ENCODE measurements at regions of chr10 and their contacts with region 1.

Region 1: DNA sequence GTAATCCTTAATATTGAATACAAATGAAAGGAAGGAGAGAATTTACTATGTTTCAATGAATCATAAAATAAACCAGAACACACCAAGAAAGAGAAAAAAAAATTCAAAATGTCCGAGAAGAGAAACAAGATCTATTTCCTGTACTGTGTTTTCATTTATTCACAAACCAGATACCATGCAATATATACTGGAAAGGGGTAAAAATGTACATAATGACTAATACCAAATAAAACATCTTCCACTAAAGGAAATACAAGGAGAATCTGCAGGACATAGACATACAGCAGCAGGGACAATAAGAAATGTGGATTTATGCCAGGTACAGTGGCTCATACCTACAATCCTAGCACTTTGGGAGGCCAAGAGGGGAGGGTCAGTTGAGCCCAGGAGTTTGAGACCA is 24.3 kb upstream of the TMEM26 start:
- DNase-seq: no peak
- H3K4me3 ChIP-seq: no peak overlapping the region
- H3K27ac ChIP-seq: no peak overlapping the region
- H3K4me1 ChIP-seq: no peaks in the 10 kb centered on the region
- H3K27me3 ChIP-seq: no peaks in the 10 kb centered on the region
- CTCF ChIP-seq: no peak

Region 2: GRCh38 chr10:61319386-61320256 is 157.8 kb before region 1 on chr10:
- CTCF ChIA-PET with region 1: no interaction called
- POLR2A ChIA-PET with region 1: no interaction called
- intact Hi-C with region 1: no loop called
- DNase-seq: peak in 1 of 2 experiments; percentile 35
- H3K4me3 ChIP-seq: no peak overlapping the region
- H3K27ac ChIP-seq: no peak overlapping the region
- H3K4me1 ChIP-seq: no peaks in the 10 kb centered on the region
- H3K27me3 ChIP-seq: no peaks in the 10 kb centered on the region
- CTCF ChIP-seq: no peak

Region 3: DNA sequence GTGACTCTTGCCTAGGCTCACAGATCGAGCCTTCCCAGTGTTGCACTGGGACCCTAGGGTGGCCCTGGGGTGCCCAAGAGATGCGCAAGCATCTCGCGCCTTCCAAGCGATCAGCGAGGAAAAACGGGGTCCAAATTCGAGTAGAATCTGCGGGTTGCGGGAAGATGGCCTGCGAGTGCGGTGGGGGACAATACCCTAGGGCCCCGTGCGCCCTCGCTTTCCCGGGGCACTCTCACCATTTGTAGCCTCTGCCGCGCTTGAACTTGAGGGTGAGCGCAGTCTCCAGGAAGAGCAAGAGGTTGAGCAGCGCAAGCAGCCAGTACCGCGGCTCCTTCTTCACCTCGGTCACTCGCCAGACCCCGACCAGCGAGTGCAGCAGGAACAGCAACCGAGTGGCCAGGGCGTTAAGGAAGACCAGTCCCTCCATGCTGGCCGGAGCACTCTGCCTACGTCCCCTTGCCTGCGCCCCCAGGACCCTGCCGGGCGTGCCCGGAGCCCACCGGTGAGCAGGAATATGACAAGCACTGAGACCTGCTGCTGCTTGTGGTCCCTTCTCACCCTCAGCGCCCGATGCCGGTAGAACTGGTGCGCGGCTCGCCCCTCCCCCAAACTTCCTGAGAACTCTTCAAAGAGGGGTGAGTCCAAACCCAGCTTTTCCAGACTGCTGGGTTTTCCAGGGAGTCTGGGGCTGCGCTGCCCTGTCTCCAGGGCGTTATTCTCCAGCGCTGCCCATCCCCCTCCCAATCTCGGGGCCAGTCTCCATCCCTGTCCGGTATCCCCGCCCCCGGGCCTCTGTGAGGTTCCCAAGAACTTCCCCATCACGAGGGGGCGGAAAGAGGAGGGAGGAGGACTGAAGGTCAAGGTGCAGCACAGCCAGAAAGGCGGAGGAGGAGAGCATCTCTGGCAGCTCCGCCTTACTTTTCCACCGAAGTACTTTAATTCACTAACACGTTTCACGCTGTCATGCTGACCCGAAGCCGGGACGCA is 24.5 kb before region 1 on chr10 and contains the start of gene TMEM26:
- CTCF ChIA-PET with region 1: no interaction called
- POLR2A ChIA-PET with region 1: no interaction called
- intact Hi-C with region 1: loop called (anchors 1 kb)
- DNase-seq: peak in 1 of 2 experiments; percentile 17
- H3K4me3 ChIP-seq: no peak within 1 kb of the TSS
- H3K27ac ChIP-seq: no peak within 1 kb of the TSS
- H3K4me1 ChIP-seq: no peaks in the 10 kb centered on the region
- H3K27me3 ChIP-seq: no peaks in the 10 kb centered on the region
- CTCF ChIP-seq: no peak
- total RNA-seq, gene TMEM26: not detected in 2 replicates